ENCODE measurements at regions of chrX and their contacts with region 1.

Region 1: GRCh38 chrX:151082076-151082948 is 94.1 kb upstream of the GPR50 start:
- DNase-seq: peak; percentile 22
- ATAC-seq: peak; percentile 99
- H3K4me3 ChIP-seq: no peak overlapping the region
- H3K27ac ChIP-seq: no peak overlapping the region
- H3K4me1 ChIP-seq: no peaks in the 10 kb centered on the region; the same call in 1 of the 2 replicates
- H3K27me3 ChIP-seq: peaks cover 2% of the 10 kb centered on the region
- CTCF ChIP-seq: peak; percentile 85
- POLR2A ChIP-seq: no peak
- RAD21 ChIP-seq: peak; percentile 78

Region 2: DNA sequence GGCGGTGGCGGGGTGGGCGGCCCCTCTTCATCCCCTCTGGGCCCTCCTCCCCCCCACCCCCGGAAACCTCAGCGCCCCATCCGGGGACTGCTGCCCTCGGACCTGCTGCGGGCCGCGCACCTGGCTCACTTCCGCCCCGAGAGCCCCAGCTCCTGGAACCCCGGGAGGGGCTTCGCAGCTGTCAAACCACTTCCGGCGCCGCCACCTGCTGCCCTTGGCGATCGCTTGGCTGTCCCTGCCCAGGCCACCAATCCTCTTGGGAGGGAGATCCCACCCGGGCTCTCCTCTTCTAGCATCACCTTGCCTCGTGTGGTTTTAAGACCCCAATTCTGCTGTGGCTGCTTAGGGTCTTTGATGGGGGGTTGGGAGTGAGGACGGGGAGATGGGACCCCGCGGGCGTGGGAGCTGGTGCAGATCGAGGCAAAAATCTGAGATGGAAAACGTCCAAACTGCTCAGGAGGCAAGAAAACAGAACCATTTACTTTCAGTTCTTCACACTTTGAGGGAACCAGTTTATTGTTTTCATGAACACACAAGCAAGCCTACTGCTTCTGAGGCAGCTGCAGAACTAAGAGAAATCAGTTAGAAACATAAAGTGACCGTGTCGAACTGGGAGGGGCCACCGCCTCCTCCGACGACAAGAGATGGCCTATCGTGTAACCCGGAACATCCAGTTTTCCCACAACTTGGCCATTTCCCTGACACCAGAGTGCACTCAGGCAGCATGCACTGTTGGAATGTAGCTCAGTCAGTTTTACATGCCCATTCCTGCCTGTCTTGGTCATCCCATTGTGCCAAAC is 388.3 kb before region 1 on chrX:
- CTCF ChIA-PET with region 1: no interaction called
- POLR2A ChIA-PET with region 1: no interaction called
- dilution Hi-C with region 1: no loop called
- in situ Hi-C with region 1: no loop called
- intact Hi-C with region 1: loop called (anchors 5 kb)
- DNase-seq: peak; percentile 79
- ATAC-seq: peak; percentile 62
- H3K4me3 ChIP-seq: peak overlapping the region; percentile 87
- H3K27ac ChIP-seq: peak overlapping the region; percentile 79
- H3K4me1 ChIP-seq: peaks cover 4% of the 10 kb centered on the region; the same call in 1 of the 2 replicates
- H3K27me3 ChIP-seq: no peaks in the 10 kb centered on the region
- CTCF ChIP-seq: no peak
- POLR2A ChIP-seq: peak; percentile 78
- RAD21 ChIP-seq: no peak

Region 3: DNA sequence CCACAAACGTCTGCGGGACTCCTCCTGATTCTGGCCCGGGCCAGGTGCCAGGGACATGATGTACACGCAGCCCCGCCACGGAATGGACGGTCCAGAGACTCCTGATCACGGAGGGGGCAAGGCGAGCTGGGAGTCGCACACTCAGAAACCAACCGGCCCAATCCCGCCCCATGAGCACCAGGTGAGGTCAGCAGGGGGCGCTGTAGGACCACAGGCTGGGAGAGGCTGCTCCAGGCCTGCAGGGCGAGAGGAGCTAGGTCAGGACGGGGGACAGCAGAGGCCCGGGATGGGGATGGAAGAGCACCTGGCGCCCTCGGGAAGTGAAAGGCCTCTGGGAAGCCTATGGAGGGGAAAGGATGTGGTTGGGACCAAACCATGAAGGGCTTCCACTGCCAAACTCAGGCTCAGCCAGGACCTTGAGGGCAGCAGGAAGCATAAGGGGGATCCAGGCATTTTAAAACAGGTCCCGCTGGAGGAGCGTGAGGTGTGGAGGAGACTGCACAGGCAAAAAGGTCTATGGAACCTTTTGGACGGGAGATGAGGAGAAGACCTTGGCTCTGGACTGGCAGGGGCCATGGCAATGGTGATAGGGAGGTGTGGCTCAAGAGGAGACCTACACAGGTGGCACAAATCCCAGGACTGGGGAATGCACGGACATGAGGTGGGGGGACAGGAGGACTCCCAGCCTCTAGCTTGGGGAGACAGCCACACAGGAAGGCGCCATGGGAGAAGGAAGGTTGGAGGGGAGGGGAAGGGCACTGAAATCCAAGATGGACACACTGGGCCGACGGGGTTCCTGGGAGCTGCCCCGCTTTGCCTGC is 310.0 kb before region 1 on chrX:
- CTCF ChIA-PET with region 1: interaction called, 33 read pairs
- POLR2A ChIA-PET with region 1: no interaction called
- dilution Hi-C with region 1: no loop called
- in situ Hi-C with region 1: loop called (anchors 5 kb)
- intact Hi-C with region 1: loop called (anchors 1 kb)
- DNase-seq: peak; percentile 45
- ATAC-seq: peak; percentile 81
- H3K4me3 ChIP-seq: no peak overlapping the region
- H3K27ac ChIP-seq: no peak overlapping the region
- H3K4me1 ChIP-seq: peaks cover 3% of the 10 kb centered on the region
- H3K27me3 ChIP-seq: no peaks in the 10 kb centered on the region
- CTCF ChIP-seq: peak; percentile 81
- POLR2A ChIP-seq: no peak
- RAD21 ChIP-seq: peak; percentile 91

Region 4: GRCh38 chrX:150898343-150899190 is 183.7 kb before region 1 on chrX and contains the start of gene CD99L2:
- CTCF ChIA-PET with region 1: no interaction called
- POLR2A ChIA-PET with region 1: no interaction called
- dilution Hi-C with region 1: no loop called
- in situ Hi-C with region 1: no loop called
- intact Hi-C with region 1: loop called (anchors 2 kb)
- DNase-seq: peak; percentile 78
- ATAC-seq: peak; percentile 96
- H3K4me3 ChIP-seq: peak within 1 kb of the TSS; percentile 95
- H3K27ac ChIP-seq: peak within 1 kb of the TSS; percentile 66
- H3K4me1 ChIP-seq: no peaks in the 10 kb centered on the region
- H3K27me3 ChIP-seq: peaks cover under 1% of the 10 kb centered on the region; the same call in 1 of the 2 replicates
- CTCF ChIP-seq: no peak
- POLR2A ChIP-seq: peak; percentile 66; the same call in 1 of the 2 replicates
- RAD21 ChIP-seq: no peak
- total RNA-seq, gene CD99L2: 17.4 and 20.6 TPM in 2 replicates

Region 5: DNA sequence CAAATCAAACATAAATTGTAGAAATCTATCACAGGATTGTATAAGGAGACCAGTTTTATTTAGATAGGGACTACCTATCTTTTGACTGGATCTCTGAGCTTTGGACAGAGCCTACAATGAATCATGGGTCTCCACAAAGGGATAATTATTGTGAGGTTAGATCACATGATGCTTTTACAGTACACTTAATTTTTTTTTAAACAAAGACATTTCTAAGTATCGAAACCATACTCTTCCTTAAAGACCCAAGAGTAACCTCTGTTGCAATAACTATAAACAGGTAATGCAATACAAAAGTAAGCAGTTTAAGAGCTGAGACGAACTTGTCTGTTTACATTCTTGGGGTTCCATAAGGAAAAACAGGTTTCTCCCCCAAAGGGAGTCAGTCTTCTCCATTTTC is 956.5 kb after region 1 on chrX:
- CTCF ChIA-PET with region 1: no interaction called
- POLR2A ChIA-PET with region 1: no interaction called
- dilution Hi-C with region 1: no loop called
- in situ Hi-C with region 1: no loop called
- intact Hi-C with region 1: no loop called
- DNase-seq: no peak
- ATAC-seq: no peak
- H3K4me3 ChIP-seq: no peak overlapping the region
- H3K27ac ChIP-seq: no peak overlapping the region
- H3K4me1 ChIP-seq: no peaks in the 10 kb centered on the region
- H3K27me3 ChIP-seq: no peaks in the 10 kb centered on the region
- CTCF ChIP-seq: no peak
- POLR2A ChIP-seq: no peak
- RAD21 ChIP-seq: no peak